Left lung (tissue), 14 donors: ENCODE measurements at regions of chrX and their contacts with region 1.

Region 1: DNA sequence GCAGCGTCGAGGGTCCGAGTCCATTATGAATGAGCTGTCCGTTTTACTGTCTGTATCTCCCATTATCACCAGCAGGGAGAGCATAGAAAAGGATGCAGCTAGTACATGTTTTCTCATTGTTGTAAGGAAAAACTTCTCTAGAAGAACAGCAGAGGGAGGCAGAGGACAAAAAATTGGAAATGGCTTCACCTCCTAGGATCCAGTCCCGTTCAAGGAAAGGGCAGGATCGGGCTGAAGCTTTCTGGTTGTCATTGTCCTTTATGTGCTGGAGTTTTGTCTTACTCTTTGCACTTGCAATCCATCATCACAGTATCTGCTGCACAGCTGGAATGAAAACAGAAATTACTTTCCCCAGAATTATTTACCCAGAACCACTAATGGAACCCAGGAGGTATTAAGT is 14.7 kb downstream of the NDP start:
- DNase-seq: peak in 2 of 4 donors; percentile 64 to 74
- ATAC-seq: peak; percentile 94
- H3K4me3 ChIP-seq: no peak overlapping the region
- H3K27ac ChIP-seq: no peak overlapping the region
- H3K4me1 ChIP-seq: no peaks in the 10 kb centered on the region
- H3K27me3 ChIP-seq: no peaks in the 10 kb centered on the region
- CTCF ChIP-seq: peak; percentile 61 to 63

Region 2: DNA sequence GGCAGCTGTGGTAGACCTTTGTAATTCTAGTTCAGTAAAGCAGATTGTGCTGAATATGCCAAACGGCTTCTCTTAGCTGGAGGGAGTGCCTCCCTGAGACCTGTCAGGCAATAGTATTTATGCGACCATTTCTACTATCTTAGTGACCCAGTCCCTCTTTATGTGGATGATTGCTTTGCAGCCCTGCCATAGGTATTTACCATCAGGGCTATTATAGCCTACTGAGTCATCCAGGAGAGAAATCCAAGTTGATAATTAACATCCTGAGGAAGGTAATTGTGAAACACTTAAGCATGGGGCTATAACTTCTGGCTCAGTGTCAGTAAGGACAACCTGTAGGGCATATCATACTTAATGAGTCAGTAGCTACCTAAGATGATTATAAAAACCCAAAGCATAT is 406.4 kb before region 1 on chrX:
- intact Hi-C with region 1: no loop called
- DNase-seq: no peak
- ATAC-seq: peak; percentile 79
- H3K4me3 ChIP-seq: no peak overlapping the region
- H3K27ac ChIP-seq: no peak overlapping the region
- H3K4me1 ChIP-seq: no peaks in the 10 kb centered on the region
- H3K27me3 ChIP-seq: no peaks in the 10 kb centered on the region
- CTCF ChIP-seq: no peak

Region 3: DNA sequence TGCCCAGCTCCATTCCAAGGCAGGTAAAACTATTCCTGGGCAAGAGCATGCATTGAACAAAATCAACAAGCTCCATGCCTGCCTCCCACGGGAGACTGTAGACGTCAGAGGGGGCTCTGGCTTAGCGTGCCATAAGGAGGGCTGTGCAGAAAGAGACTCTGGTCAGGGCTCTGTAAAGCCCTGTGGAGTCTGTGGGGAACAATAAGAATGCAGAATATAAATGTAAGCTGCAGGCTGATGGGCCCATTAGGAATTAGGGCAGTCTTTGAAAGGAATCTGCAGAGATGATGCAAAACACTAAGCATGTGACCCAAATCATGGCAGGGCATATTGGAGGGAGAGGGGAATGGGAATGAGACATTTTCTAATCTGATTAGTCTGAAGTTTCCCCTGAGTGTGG is 214.7 kb after region 1 on chrX:
- intact Hi-C with region 1: no loop called
- DNase-seq: no peak
- ATAC-seq: no peak
- H3K4me3 ChIP-seq: no peak overlapping the region
- H3K27ac ChIP-seq: no peak overlapping the region
- H3K4me1 ChIP-seq: no peaks in the 10 kb centered on the region
- H3K27me3 ChIP-seq: no peaks in the 10 kb centered on the region
- CTCF ChIP-seq: no peak

Region 4: GRCh38 chrX:44244008-44244407 is 285.5 kb after region 1 on chrX:
- intact Hi-C with region 1: loop called in 1 of 2 experiments (anchors 5 kb)
- DNase-seq: peak in 1 of 4 donors; percentile 16
- ATAC-seq: peak; percentile 49
- H3K4me3 ChIP-seq: no peak overlapping the region
- H3K27ac ChIP-seq: no peak overlapping the region
- H3K4me1 ChIP-seq: no peaks in the 10 kb centered on the region
- H3K27me3 ChIP-seq: peaks cover 0 to 3% of the 10 kb centered on the region in 2 donors
- CTCF ChIP-seq: peak in 1 of 2 donors; percentile 25